ENCODE measurements at regions of chr3 and their contacts with region 1.

Region 1: GRCh38 chr3:99023590-99024192 is 122.2 kb upstream of the DCBLD2 start:
- DNase-seq: no peak
- ATAC-seq: no peak

Region 2: DNA sequence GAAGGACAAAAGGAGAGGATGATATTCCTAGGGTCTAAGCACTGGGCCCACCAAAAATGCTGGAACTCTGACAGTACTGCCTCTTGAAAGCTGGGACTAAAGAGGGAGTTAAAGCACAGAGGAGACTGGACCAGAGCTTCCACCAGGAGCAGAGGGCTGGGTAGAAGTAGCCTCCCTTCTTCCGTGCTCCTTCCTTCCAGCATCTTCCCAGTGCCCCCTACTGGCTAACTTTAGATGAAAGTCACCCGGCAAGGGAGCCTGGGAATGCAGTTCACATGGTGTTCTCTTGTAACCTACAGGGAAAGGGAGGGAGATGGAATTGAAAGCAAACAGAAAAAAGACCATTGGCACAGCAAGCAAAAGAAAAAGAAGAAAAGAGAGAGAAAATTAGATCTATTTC is 508.6 kb after region 1 on chr3:
- intact Hi-C with region 1: loop called (anchors 10 kb)
- DNase-seq: peak; percentile 16
- ATAC-seq: peak; percentile 69

Region 3: GRCh38 chr3:99753268-99753975 is 729.7 kb after region 1 on chr3:
- intact Hi-C with region 1: loop called (anchors 5 kb)
- DNase-seq: no peak
- ATAC-seq: peak; percentile 77

Measured in Right ventricle myocardium inferior (tissue), 1 donor.